ENCODE measurements at regions of chr18 and their contacts with region 1.

Region 1: GRCh38 chr18:5439986-5440696 is 103.7 kb downstream of the EPB41L3 start:
- DNase-seq: no peak
- H3K4me3 ChIP-seq: no peak overlapping the region
- H3K27ac ChIP-seq: no peak overlapping the region
- H3K27me3 ChIP-seq: no peaks in the 10 kb centered on the region
- CTCF ChIP-seq: no peak

Region 2: GRCh38 chr18:5503740-5504139 is 63.6 kb after region 1 on chr18:
- intact Hi-C with region 1: loop called in 1 of 2 experiments (anchors 10 kb)
- DNase-seq: no peak
- H3K4me3 ChIP-seq: no peak overlapping the region
- H3K27ac ChIP-seq: no peak overlapping the region
- H3K27me3 ChIP-seq: no peaks in the 10 kb centered on the region
- CTCF ChIP-seq: no peak

Region 3: GRCh38 chr18:6255116-6255705 is 815.1 kb after region 1 on chr18:
- intact Hi-C with region 1: no loop called
- DNase-seq: no peak
- H3K4me3 ChIP-seq: peak overlapping the region in 17 of 59 donors; percentile 1 to 47 (median 20)
- H3K27ac ChIP-seq: peak overlapping the region in 33 of 59 donors; percentile 1 to 74 (median 30)
- H3K27me3 ChIP-seq: no peaks in the 10 kb centered on the region
- CTCF ChIP-seq: no peak

Measured in dorsolateral prefrontal cortex (tissue), 120 donors.